GM12878 (cell line): ENCODE measurements at regions of chr20 and their contacts with region 1.

Region 1: GRCh38 chr20:48828022-48828743 is 384 bp upstream of the PREX1 start:
- DNase-seq: no peak
- ATAC-seq: peak; percentile 53
- H3K4me3 ChIP-seq: peak overlapping the region; percentile 62
- H3K27ac ChIP-seq: peak overlapping the region; percentile 76
- H3K4me1 ChIP-seq: peaks cover 34% of the 10 kb centered on the region
- H3K27me3 ChIP-seq: no peaks in the 10 kb centered on the region
- CTCF ChIP-seq: peak in 1 of 3 experiments; percentile 8; a peak in 1 of 6 replicates
- EP300 ChIP-seq: no peak
- POLR2A ChIP-seq: peak; percentile 74
- RAD21 ChIP-seq: peak; percentile 21; the same call in 1 of the 2 replicates

Region 2: GRCh38 chr20:48657475-48658470 is 170.4 kb before region 1 on chr20:
- CTCF ChIA-PET with region 1: interaction called, 35 read pairs
- POLR2A ChIA-PET with region 1: no interaction called
- RAD21 ChIA-PET with region 1: interaction called, 12 read pairs
- SMC1A ChIA-PET with region 1: interaction called, 7 read pairs
- in situ Hi-C with region 1: no loop called
- intact Hi-C with region 1: loop called (anchors 2 kb)
- DNase-seq: peak; percentile 21
- ATAC-seq: peak; percentile 94
- H3K4me3 ChIP-seq: no peak overlapping the region
- H3K27ac ChIP-seq: no peak overlapping the region
- H3K4me1 ChIP-seq: no peaks in the 10 kb centered on the region
- H3K27me3 ChIP-seq: no peaks in the 10 kb centered on the region
- CTCF ChIP-seq: peak; percentile 91 to 96 (median 93)
- EP300 ChIP-seq: no peak
- POLR2A ChIP-seq: no peak
- RAD21 ChIP-seq: peak; percentile 95

Region 3: DNA sequence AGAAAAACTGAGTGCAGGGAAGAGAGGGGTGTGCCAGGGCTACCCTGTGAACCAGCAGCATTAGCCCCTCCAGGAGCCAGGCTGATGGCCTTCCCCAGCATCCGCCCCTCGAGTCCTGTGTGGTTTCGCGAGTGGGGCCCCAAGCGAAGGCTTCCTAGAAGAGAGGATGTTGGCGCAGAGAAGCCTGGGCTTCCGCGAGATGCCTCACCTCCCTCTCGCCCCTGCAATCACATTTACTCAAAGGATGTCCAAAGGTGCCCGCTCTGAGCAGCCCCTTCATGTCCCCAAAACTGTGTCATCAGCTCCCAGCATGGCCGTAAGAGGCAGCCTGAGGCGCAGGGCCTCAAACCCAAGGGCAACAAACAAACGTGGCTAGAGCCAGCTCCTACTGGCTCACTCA is 112.1 kb before region 1 on chr20:
- CTCF ChIA-PET with region 1: interaction called, 5 read pairs
- POLR2A ChIA-PET with region 1: interaction called, 3 read pairs
- RAD21 ChIA-PET with region 1: interaction called, 7 read pairs
- SMC1A ChIA-PET with region 1: interaction called, 12 read pairs
- in situ Hi-C with region 1: no loop called
- intact Hi-C with region 1: loop called (anchors 2 kb)
- DNase-seq: no peak
- ATAC-seq: no peak
- H3K4me3 ChIP-seq: no peak overlapping the region
- H3K27ac ChIP-seq: peak overlapping the region; percentile 87
- H3K4me1 ChIP-seq: peaks cover 84% of the 10 kb centered on the region
- H3K27me3 ChIP-seq: no peaks in the 10 kb centered on the region
- CTCF ChIP-seq: no peak
- EP300 ChIP-seq: no peak
- POLR2A ChIP-seq: no peak
- RAD21 ChIP-seq: no peak

Region 4: DNA sequence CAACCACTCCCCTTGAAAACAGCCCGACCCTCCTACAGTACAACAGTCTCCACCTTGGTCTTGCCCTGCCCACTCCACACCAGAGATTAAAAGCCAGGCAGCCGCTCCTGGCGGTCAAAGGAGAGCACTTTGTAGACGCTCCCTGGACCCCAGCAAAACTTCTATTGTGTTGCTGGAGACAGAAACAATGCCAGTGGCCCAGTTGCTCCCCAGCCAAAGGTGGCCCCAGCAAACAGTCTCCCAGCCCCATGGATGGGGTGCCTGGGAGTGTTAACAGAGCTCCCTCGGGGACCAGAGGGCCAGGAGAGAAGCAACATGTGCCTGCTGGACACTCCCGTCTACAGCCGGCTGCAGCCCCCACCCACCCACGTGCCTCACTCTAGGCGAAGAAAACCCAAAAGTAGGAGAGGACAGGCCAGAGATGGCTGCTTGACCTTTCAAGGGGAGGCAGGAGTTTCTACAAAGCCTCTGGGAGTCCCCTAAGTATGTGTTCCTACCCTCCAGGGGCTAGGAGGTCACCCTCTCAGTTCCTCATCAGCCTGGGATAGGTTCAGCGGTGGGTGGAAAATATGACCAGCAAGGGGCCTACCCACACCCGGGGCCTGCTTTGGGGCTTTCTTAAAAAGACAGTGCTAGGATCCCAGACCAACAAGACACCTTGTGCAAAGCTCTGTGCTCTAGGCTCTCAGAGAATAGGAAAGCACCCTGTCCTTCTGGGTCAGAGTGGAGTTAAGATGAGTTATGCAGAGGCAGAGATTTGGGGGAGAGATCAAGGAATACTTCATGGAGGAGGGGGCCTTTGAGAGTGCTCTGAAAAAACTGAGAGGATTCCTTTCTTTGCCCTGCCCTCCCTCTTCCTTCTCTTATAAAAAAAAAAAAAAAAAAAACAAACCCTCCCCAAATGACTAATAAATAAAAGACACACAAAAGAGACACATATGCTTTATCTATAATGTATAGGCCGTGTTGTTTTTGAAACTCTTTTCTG is 18.6 kb after region 1 on chr20:
- CTCF ChIA-PET with region 1: interaction called, 14 read pairs
- POLR2A ChIA-PET with region 1: interaction called, 45 read pairs
- RAD21 ChIA-PET with region 1: interaction called, 18 read pairs
- SMC1A ChIA-PET with region 1: interaction called, 36 read pairs
- in situ Hi-C with region 1: no loop called
- intact Hi-C with region 1: loop called (anchors 1 kb)
- DNase-seq: peak; percentile 93
- ATAC-seq: peak; percentile 97
- H3K4me3 ChIP-seq: no peak overlapping the region; the same call in 1 of the 2 replicates
- H3K27ac ChIP-seq: peak overlapping the region; percentile 91
- H3K4me1 ChIP-seq: peaks cover 36% of the 10 kb centered on the region
- H3K27me3 ChIP-seq: no peaks in the 10 kb centered on the region
- CTCF ChIP-seq: no peak
- EP300 ChIP-seq: peak; percentile 92 to 97
- POLR2A ChIP-seq: peak; percentile 49; the same call in 1 of the 2 replicates
- RAD21 ChIP-seq: no peak

Region 5: DNA sequence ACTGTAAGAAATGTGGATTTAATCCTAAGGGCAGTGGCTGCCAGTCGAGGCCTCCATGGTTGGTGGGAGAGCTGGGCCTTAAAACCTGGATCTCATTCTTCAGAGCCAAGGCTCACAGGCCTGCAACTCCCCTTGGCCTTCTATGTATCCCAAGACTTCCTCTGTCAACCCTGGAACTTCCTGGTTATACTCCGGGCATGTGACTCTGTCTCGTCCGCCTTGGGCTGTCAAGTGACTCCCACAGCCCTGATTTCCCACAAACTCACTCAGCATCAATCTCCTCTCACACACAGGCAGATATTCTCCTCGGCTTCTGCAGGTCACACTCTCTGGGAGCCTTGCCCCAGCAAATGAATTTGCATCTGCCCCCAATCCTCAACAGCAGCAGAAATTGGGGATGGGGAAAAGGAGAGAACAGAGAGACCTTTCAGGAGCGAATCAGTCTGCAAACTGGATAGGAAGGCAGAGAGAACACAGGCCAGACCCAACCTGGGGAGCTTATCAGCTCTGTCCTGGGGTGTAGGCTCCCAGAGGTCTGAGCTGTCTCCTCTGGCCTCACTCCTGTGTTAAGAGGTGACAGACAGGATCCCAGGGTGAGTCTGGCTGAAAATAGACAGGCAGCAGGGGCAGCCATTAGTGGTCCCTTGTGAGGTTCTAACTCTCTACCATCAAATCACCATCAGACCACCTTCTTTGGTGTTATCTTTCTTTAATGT is 30.1 kb after region 1 on chr20:
- CTCF ChIA-PET with region 1: no interaction called
- POLR2A ChIA-PET with region 1: interaction called, 6 read pairs
- RAD21 ChIA-PET with region 1: interaction called, 6 read pairs
- SMC1A ChIA-PET with region 1: interaction called, 10 read pairs
- in situ Hi-C with region 1: no loop called
- intact Hi-C with region 1: no loop called
- DNase-seq: no peak
- ATAC-seq: no peak
- H3K4me3 ChIP-seq: no peak overlapping the region
- H3K27ac ChIP-seq: no peak overlapping the region
- H3K4me1 ChIP-seq: peaks cover 42% of the 10 kb centered on the region
- H3K27me3 ChIP-seq: no peaks in the 10 kb centered on the region
- CTCF ChIP-seq: no peak
- EP300 ChIP-seq: no peak
- POLR2A ChIP-seq: no peak
- RAD21 ChIP-seq: no peak

Region 6: DNA sequence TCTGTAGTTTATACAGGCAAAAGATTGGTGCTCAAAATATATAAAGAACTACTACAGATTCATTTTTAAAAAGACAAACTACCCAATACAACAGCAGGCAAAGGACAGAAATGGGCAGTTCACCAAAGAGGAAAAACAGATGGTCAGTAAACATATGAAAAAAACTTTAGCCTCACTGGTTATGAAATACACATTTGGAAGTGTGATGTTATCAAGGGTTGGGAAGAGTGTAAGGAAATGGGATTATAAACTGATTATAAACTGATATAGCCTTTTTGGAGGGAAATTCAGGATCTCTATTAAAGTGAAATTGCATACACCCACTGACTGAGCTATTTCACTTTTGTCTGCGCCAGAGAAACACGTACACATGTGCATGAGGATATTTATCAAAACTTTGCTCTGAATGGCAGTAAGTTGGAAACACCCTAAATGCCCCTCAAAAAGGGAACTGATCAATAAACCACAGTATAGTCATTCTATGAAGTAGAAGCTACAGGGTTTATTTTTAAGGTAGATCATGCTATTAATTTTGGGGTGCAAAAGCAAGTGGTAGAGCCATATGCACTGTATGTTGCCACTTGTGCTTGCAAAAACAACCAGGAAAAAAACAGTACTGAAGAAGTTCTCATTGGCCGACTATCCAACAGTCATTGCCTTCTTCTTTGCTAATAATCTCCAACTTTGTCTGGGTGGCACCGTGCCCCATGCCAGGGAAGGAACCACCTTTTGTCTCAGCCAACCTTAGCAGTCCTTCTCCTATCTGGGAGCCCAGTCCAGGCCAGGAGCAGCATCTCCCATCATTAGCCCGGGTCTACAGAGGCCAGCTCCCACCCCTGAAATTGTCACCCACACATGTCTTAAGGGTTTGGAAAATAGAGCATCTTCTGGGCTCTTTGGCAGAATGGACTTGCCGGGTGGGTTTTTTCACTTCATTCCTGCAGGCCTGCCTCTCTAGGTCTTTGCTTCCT is 61.2 kb after region 1 on chr20:
- CTCF ChIA-PET with region 1: no interaction called
- POLR2A ChIA-PET with region 1: interaction called, 5 read pairs
- RAD21 ChIA-PET with region 1: interaction called, 3 read pairs
- SMC1A ChIA-PET with region 1: interaction called, 4 read pairs
- in situ Hi-C with region 1: no loop called
- intact Hi-C with region 1: loop called (anchors 5 kb)
- DNase-seq: no peak
- ATAC-seq: peak; percentile 89
- H3K4me3 ChIP-seq: 0 out of 2 replicates have a peak overlapping the region, but pooled peaks have one; percentile 39
- H3K27ac ChIP-seq: peak overlapping the region; percentile 43; the same call in 1 of the 2 replicates
- H3K4me1 ChIP-seq: peaks cover 6% of the 10 kb centered on the region
- H3K27me3 ChIP-seq: no peaks in the 10 kb centered on the region
- CTCF ChIP-seq: no peak
- EP300 ChIP-seq: peak in 1 of 2 experiments; percentile 77; a peak in 1 of 4 replicates
- POLR2A ChIP-seq: no peak
- RAD21 ChIP-seq: no peak